Psoas muscle (tissue), 8 donors: ENCODE measurements at regions of chr2 and their contacts with region 1.

Region 1: GRCh38 chr2:96618604-96619283 is 19.4 kb downstream of the KANSL3 start:
- DNase-seq: no peak
- ATAC-seq: no peak
- H3K4me3 ChIP-seq: no peak overlapping the region
- H3K27ac ChIP-seq: peak overlapping the region; percentile 79
- H3K4me1 ChIP-seq: peaks cover 44% of the 10 kb centered on the region
- H3K27me3 ChIP-seq: no peaks in the 10 kb centered on the region
- CTCF ChIP-seq: no peak

Region 2: GRCh38 chr2:96291751-96292150 is 327.0 kb before region 1 on chr2:
- intact Hi-C with region 1: no loop called
- DNase-seq: no peak
- ATAC-seq: no peak
- H3K4me3 ChIP-seq: no peak overlapping the region
- H3K27ac ChIP-seq: no peak overlapping the region
- H3K4me1 ChIP-seq: no peaks in the 10 kb centered on the region
- H3K27me3 ChIP-seq: no peaks in the 10 kb centered on the region
- CTCF ChIP-seq: no peak

Region 3: GRCh38 chr2:96665083-96665569 is 46.4 kb after region 1 on chr2:
- intact Hi-C with region 1: loop called in 1 of 2 experiments (anchors 2 kb)
- DNase-seq: peak in 1 of 2 donors; percentile 64
- ATAC-seq: peak; percentile 94 to 96 (median 94)
- H3K4me3 ChIP-seq: no peak overlapping the region
- H3K27ac ChIP-seq: peak overlapping the region; percentile 86
- H3K4me1 ChIP-seq: peaks cover 18% of the 10 kb centered on the region
- H3K27me3 ChIP-seq: no peaks in the 10 kb centered on the region
- CTCF ChIP-seq: no peak